Dendritic cell treated with granulocyte-macrophage colony-stimulating factor and Interleukin-4, amounts not matched to agents 40 ng/mL and 50 ng/mL, for 4 days (primary cell): ENCODE measurements at regions of chr7 and their contacts with region 1.

Region 1: DNA sequence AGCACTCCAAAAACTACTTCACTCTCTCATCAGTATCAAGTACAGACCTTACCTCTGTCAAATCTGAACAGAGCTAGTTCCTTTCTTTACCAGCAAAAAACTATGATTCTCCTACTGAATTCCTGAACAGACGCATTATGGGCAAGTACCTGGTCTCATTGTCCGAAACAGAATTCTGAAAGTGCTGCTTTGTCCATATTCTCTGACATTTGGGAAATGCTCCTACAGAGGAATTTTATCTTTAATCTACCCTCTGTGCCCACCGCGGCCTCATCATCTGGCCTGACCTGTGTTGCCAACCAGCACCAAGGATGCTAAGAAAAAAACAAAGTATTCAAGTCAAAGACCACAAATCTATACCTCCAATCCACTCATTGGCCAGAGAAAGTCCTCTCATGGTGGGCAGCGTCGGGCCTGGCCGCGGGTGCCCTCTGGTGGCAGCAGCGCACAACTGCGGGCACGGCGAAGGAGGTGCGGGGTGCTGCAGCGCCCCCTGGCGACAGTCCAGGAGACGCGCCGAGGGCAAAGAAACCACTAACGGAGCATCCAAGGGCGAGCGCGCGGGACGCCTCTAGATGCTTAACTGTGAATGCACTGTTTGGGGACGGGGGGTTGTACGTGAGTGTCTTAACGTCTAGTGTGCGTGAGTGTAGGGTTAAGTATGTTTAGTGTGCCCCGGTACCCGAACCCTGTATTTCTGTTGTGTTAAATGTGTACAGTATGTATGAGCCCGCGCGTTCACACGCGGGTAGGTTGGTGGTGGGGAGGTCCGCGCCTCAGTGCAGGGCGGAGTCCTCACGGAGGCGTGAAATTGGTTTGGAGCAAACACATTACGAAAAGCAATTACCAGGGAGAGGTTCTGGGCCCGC is 5.0 kb upstream of the GBX1 start:
- H3K4me3 Mint-ChIP-seq: no peak overlapping the region
- H3K27ac Mint-ChIP-seq: no peak overlapping the region
- H3K4me1 Mint-ChIP-seq: peaks cover 13% of the 10 kb centered on the region
- H3K27me3 Mint-ChIP-seq: peaks cover 83% of the 10 kb centered on the region

Region 2: DNA sequence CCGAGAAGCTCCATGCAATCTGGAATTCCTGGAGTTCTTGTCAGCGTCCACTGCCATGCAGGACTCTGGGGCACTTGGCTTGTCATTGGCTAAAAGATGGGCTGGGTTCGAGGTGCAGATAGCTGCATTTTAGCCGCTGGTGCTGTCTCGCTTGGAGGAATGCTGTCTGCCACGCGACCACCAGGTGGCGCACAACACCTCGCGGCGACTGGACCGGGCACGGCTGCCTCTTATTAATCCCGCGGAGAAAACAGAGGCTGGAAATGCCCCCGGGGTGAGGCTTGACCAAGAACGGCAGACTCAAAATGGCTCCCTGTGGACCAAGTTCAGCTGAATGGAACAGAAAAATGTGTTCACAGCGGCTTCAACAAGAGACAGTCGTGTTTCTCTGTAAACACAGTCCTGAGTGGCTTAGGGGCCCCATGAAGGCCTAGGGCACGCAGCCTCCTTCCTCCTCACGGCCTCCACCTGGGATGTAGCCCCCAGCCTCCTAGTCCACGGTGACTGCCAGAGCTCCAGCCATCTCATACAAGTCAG is 274.0 kb before region 1 on chr7:
- intact Hi-C with region 1: loop called (anchors 2 kb)
- H3K4me3 Mint-ChIP-seq: no peak overlapping the region
- H3K27ac Mint-ChIP-seq: no peak overlapping the region
- H3K4me1 Mint-ChIP-seq: peaks cover 17% of the 10 kb centered on the region
- H3K27me3 Mint-ChIP-seq: peaks cover 83% of the 10 kb centered on the region

Region 3: DNA sequence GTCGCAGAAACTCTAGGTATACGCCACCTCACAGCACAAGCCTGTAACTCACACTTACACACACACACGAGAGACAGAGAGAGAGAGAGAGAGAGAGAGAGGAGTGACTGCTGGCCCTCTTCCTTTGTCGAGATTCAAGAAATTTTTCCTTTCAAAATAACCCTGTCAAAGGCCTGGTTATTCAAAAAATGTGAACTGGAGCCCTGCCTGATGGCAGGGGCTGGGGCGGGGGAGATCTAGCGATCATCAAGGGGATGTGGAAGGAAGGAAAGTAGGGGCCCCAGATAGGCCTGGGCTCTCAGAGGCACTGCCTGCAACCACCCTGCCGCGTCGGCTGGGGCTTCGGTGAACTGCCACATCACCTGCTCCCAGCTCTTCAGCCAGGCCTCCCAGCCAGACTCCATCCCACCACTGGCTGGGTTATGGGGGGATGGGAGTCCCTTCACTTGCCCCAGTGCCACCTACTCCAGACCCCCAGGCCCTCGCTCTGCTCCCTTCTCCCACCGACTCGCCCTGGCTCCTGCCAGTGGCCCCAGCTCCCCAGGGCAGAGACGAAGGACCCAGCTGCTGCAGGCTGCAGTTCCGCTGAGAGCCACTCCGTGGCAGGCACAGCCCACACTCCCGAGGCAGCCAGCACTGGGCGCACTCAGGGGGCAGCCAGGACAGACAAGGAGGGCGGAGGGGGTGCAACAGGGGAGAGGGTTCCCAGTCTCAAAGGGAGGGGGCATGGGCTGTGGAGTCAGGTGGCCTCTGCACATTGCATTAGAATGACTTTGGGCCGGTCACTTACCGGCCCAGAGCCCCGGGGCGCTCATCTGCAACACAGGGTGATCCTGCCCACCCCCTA is 209.7 kb before region 1 on chr7:
- intact Hi-C with region 1: loop called (anchors 1 kb)
- H3K4me3 Mint-ChIP-seq: no peak overlapping the region
- H3K27ac Mint-ChIP-seq: no peak overlapping the region
- H3K4me1 Mint-ChIP-seq: no peaks in the 10 kb centered on the region
- H3K27me3 Mint-ChIP-seq: peaks cover 81% of the 10 kb centered on the region

Region 4: DNA sequence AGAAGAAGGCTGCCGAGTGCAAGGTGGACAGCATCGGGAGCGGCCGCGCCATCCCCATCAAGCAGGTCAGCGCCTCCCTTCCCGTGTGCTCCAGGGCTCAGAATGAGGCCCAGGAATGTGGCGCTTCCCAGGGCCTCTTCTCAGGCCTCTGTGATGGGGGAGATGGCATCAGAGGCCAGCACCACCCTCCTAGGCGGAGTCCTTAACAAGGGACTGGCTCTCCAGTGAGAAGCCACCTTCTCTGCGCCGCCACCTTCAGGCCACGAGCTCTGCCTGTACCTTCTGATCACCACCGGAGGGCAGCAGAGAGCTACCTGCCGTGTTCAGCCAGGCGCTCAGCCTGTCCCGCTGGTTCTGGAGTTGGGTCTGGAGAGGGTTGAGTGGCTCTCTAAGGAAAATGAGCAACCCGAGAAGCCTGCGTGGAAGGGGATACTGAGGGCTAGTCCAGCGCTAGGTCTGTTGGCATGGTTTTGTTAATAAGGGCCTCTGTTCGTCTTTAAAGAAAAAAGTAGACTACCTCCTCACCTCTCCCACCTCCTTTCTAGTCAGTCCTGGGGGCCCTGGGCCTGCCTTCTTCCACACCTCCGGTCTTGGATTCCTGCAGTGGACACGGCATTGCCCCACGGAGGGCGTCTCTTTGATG is 48.6 kb before region 1 on chr7:
- intact Hi-C with region 1: loop called (anchors 5 kb)
- H3K4me3 Mint-ChIP-seq: no peak overlapping the region
- H3K27ac Mint-ChIP-seq: no peak overlapping the region
- H3K4me1 Mint-ChIP-seq: peaks cover 25% of the 10 kb centered on the region
- H3K27me3 Mint-ChIP-seq: no peaks in the 10 kb centered on the region

Region 5: DNA sequence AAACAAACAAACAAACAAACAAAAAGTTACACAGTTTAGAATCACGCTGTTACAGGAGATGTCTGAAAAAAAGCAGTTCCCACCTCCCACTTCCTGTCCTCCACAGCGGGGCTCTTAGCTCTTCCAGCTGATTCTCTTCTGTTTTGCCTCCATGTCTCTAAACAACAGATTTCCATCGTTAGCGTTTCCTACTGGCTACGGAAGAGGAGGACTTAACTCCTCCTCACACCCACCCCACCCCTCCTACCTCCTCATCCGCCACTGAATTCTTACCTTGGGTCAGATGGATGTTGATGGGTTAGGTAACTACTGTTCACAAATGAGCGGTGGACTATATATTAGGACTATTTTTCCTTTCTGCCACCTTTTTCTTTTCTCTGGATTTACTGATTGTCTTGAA is 132.3 kb after region 1 on chr7:
- intact Hi-C with region 1: loop called (anchors 10 kb)
- H3K4me3 Mint-ChIP-seq: no peak overlapping the region
- H3K27ac Mint-ChIP-seq: no peak overlapping the region
- H3K4me1 Mint-ChIP-seq: peaks cover 13% of the 10 kb centered on the region
- H3K27me3 Mint-ChIP-seq: peaks cover 70% of the 10 kb centered on the region